ENCODE measurements at regions of chr15 and their contacts with region 1.

Region 1: GRCh38 chr15:101242160-101242998 is 9.5 kb downstream of the CHSY1 start:
- DNase-seq: no peak
- ATAC-seq: peak; percentile 29; the same call in 1 of the 2 replicates
- H3K4me3 ChIP-seq: no peak overlapping the region
- H3K27ac ChIP-seq: peak overlapping the region; percentile 35; the same call in 1 of the 2 replicates
- H3K4me1 ChIP-seq: peaks cover 59% of the 10 kb centered on the region
- H3K27me3 ChIP-seq: no peaks in the 10 kb centered on the region
- CTCF ChIP-seq: no peak

Region 2: GRCh38 chr15:101193120-101193644 is 49.2 kb before region 1 on chr15:
- CTCF ChIA-PET with region 1: no interaction called
- POLR2A ChIA-PET with region 1: no interaction called
- in situ Hi-C with region 1: loop called (anchors 5 kb)
- intact Hi-C with region 1: no loop called
- DNase-seq: no peak
- ATAC-seq: peak; percentile 33; the same call in 1 of the 2 replicates
- H3K4me3 ChIP-seq: no peak overlapping the region
- H3K27ac ChIP-seq: no peak overlapping the region; the same call in 1 of the 2 replicates
- H3K4me1 ChIP-seq: peaks cover 47% of the 10 kb centered on the region
- H3K27me3 ChIP-seq: no peaks in the 10 kb centered on the region
- CTCF ChIP-seq: no peak

Region 3: GRCh38 chr15:101206176-101206591 is 36.2 kb before region 1 on chr15:
- CTCF ChIA-PET with region 1: no interaction called
- POLR2A ChIA-PET with region 1: no interaction called
- in situ Hi-C with region 1: no loop called
- intact Hi-C with region 1: loop called (anchors 5 kb)
- DNase-seq: no peak
- ATAC-seq: no peak
- H3K4me3 ChIP-seq: no peak overlapping the region
- H3K27ac ChIP-seq: peak overlapping the region; percentile 63
- H3K4me1 ChIP-seq: peaks cover 69% of the 10 kb centered on the region
- H3K27me3 ChIP-seq: no peaks in the 10 kb centered on the region
- CTCF ChIP-seq: no peak